Mammary epithelial cell (primary cell): ENCODE measurements at regions of chr1 and their contacts with region 1.

Region 1: DNA sequence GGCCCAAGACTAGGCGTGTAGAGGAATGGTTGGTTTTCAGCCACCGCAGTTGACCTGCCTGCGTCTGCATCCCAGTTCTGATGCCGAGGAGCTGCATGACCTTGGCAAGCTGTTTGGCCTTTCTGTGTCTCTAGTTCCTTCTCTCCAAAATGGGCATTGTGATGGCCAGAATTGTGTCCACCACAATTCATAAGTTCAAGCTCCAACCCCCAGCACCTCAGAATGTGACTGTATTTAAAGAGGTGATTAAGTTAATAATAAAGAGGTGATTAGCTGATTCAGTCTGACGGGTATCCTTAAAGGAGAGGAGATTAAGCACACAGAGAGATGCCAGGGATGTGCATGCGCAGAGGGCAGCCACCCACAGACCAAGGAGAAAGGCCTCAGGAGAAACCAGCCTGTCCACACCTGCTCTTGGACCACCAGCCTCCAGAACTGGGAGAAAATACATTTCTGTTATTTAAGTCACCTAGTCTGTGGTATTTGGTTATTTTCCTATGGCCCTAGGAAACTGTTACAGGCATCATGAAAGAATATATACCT is 28.5 kb downstream of the MAB21L3 start:
- DNase-seq: no peak
- H3K4me3 ChIP-seq: no peak overlapping the region
- H3K27ac ChIP-seq: no peak overlapping the region
- H3K4me1 ChIP-seq: no peaks in the 10 kb centered on the region
- H3K27me3 ChIP-seq: no peaks in the 10 kb centered on the region
- CTCF ChIP-seq: no peak

Region 2: DNA sequence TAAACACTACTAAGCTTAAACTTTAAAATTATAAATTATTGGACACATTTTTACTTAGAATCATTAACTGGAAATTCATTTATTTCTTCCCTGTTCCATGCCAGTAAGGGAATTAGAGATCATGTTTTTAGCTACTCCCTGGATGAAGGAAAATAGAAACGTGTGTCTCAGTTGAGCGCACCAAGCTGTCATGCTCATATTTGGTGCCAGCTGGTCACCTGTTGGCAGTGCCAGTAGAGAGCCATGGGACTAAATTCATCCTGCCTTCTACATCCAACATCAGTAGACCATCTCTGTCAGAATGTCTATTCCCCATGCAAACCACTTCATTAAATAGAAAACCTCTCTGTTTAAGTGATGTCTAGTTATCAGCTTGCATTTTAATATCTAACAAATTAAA is 180.8 kb before region 1 on chr1:
- CTCF ChIA-PET with region 1: no interaction called
- dilution Hi-C with region 1: no loop called
- in situ Hi-C with region 1: no loop called
- intact Hi-C with region 1: no loop called
- DNase-seq: no peak
- H3K4me3 ChIP-seq: no peak overlapping the region
- H3K27ac ChIP-seq: no peak overlapping the region
- H3K4me1 ChIP-seq: no peaks in the 10 kb centered on the region
- H3K27me3 ChIP-seq: no peaks in the 10 kb centered on the region
- CTCF ChIP-seq: no peak

Region 3: DNA sequence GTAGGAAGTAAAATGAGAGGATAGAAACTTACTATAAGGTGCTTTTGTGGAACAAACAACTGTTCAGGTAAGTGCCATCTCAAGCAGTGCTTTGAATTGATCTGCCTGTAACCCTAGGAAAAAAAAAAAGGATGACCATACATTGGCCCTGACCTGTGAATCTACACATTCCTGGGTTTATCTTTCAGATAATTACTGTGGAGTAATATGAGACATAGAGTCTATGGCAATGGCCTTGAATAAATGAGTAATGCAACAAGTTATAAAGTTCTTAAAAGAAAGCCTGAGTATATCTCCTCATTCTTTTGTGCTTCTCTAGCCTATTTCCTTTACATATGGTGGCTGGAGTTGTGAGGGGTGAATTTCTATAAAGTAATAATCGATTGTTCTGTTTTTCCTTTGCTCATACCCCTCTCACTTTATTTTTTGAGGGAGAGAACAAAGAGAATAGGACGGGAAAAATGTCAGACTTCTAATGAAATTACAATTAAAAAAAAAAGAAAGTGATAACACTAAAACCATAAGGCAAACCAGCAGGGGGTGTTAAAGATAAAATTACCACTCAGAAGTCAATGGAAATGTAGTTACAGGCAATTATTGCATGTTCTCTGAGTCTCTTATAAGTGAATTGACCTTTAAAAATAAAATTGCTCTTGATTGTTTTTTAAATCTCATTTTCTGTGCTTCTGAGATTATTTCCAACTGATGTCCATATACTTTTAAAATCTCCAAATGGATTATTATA is 220.9 kb after region 1 on chr1:
- CTCF ChIA-PET with region 1: no interaction called
- dilution Hi-C with region 1: no loop called
- in situ Hi-C with region 1: no loop called
- intact Hi-C with region 1: loop called (anchors 5 kb)
- DNase-seq: no peak
- H3K4me3 ChIP-seq: no peak overlapping the region
- H3K27ac ChIP-seq: no peak overlapping the region
- H3K4me1 ChIP-seq: peaks cover 14% of the 10 kb centered on the region
- H3K27me3 ChIP-seq: no peaks in the 10 kb centered on the region
- CTCF ChIP-seq: peak; percentile 32 to 46

Region 4: GRCh38 chr1:116403496-116404136 is 264.0 kb after region 1 on chr1:
- CTCF ChIA-PET with region 1: no interaction called
- dilution Hi-C with region 1: no loop called
- in situ Hi-C with region 1: no loop called
- intact Hi-C with region 1: no loop called
- DNase-seq: no peak
- H3K4me3 ChIP-seq: no peak overlapping the region
- H3K27ac ChIP-seq: no peak overlapping the region
- H3K4me1 ChIP-seq: peaks cover 26% of the 10 kb centered on the region
- H3K27me3 ChIP-seq: no peaks in the 10 kb centered on the region
- CTCF ChIP-seq: no peak

Region 5: DNA sequence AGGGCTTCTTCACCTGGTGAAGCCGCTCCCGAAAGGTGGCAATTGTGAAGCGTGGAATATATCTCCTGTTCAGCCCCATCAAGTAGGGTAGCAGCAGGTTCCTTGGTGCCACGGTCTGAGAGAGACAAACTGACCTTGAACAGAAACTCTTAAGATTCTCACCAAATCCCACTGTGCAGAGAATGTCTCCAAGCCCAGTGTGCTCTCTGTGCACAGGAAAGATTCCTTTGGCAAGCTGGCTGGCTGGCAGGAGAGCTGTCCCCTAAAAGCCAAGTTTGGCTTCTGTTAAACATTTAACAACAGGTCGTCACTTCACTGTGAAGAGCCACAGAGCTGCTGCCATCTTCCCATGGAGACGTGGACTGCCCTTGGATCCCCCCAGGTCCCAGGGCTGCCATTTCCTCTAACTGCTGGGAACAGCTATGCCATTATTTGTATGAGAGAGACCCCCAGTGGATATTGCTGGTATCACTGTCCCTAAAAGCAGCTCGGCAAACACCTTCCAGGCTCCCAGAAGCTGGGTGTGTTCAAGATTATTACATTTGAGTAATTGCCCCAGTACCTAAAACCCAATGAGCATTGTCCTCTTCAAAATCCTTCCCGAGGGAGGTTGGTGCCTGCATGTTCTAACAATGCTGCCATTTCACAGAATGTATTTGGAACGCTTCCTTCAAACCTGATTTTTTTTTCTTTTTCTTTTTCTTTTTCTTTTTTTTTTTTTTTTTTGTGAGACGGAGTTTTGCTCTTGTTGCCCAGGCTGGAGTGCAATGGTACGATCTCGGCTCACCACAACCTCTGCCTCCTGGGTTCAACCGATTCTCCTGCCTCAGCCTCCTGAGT is 359.3 kb after region 1 on chr1:
- CTCF ChIA-PET with region 1: interaction called, 13 read pairs
- dilution Hi-C with region 1: no loop called
- in situ Hi-C with region 1: no loop called
- intact Hi-C with region 1: loop called (anchors 1 kb)
- DNase-seq: peak; percentile 60
- H3K4me3 ChIP-seq: no peak overlapping the region
- H3K27ac ChIP-seq: no peak overlapping the region
- H3K4me1 ChIP-seq: peaks cover 13% of the 10 kb centered on the region
- H3K27me3 ChIP-seq: no peaks in the 10 kb centered on the region
- CTCF ChIP-seq: peak; percentile 82 to 84